Psoas muscle (tissue), 8 donors: ENCODE measurements at regions of chr2 and their contacts with region 1.

Region 1: DNA sequence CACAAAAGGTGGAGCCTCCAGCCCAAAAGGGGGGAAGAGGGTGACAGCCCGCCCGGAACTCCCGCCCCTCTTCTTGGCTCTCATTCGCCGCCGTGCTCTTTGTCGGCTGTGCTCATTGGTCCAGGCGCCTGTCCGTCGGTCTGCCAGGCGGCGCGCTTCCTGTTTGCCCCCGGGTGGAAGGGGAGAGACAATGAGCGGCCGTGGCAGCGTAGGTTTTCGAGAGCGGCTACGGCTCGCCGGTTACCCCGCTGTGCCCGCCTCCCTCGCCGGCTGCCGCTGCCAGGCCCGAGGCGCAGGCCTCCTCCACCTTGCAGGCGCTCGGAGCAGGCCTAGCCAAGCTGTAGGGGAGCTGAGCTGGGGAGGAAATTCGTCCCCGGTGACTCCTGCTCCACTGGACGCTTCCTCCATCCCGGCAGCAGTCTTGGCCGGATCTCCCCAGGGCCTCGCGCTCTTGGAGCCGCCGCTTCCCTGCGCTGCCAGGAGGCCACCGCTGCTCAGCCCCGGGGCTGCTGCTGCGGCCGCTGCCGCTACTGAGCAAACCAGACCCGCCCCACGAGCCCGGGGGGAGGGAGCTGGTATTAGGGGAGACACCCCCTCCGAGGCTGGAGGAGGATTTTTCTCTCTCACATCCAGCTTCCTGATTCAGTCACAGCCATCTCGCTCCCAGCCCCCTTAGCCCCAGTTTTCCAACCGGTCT is at the start of gene SP3:
- DNase-seq: peak; percentile 98 to 99
- ATAC-seq: peak; percentile 88 to 91 (median 89)
- H3K4me3 ChIP-seq: peak within 1 kb of the TSS; percentile 96
- H3K27ac ChIP-seq: peak within 1 kb of the TSS; percentile 100
- H3K4me1 ChIP-seq: peaks cover 35% of the 10 kb centered on the region
- H3K27me3 ChIP-seq: no peaks in the 10 kb centered on the region
- CTCF ChIP-seq: no peak
- total RNA-seq, gene SP3: 38.2 to 52.0 (median 45.4) TPM

Region 2: GRCh38 chr2:173834141-173834540 is 131.3 kb before region 1 on chr2:
- intact Hi-C with region 1: no loop called
- DNase-seq: no peak
- ATAC-seq: no peak
- H3K4me3 ChIP-seq: no peak overlapping the region
- H3K27ac ChIP-seq: no peak overlapping the region
- H3K4me1 ChIP-seq: no peaks in the 10 kb centered on the region
- H3K27me3 ChIP-seq: no peaks in the 10 kb centered on the region
- CTCF ChIP-seq: no peak

Region 3: DNA sequence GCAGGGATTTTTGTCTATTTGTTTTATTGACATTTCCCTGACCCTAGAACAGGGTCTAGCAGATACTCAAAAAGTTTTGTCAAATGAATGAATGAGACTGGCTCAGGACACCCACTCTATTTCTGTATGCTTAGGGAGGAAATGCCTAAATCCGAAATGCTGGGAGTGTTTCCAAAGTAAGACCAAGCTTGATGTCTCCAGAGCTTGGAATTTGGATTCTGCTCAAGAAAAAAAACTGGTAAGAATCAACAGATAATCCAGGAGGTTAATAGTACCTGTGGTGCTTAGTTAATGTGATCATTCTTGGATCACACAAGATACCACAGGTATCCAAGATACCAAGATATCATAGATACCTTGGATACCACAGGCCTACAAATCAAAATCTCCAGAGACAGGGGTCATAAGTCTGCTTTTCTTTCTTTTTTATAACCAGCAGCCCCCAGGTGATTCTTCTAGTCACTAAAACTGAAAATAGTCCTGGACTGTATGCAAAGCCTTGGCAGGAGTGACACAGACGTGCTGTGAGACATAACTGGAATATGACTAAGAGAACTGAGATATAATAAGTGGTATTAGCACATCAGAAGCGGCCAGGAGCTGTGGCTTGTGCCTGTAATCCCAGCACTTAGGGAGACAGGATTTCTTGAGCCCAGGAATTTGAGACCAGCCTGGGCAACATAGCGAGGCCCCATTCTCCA is 39.6 kb after region 1 on chr2:
- intact Hi-C with region 1: loop called (anchors 5 kb)
- DNase-seq: peak; percentile 41 to 73
- ATAC-seq: peak; percentile 98 to 99 (median 98)
- H3K4me3 ChIP-seq: no peak overlapping the region
- H3K27ac ChIP-seq: peak overlapping the region; percentile 74
- H3K4me1 ChIP-seq: peaks cover 10% of the 10 kb centered on the region
- H3K27me3 ChIP-seq: no peaks in the 10 kb centered on the region
- CTCF ChIP-seq: no peak

Region 4: GRCh38 chr2:174023591-174024523 is 58.4 kb after region 1 on chr2:
- intact Hi-C with region 1: loop called in 1 of 2 experiments (anchors 1 kb)
- DNase-seq: peak; percentile 63 to 81
- ATAC-seq: peak; percentile 84 to 90 (median 88)
- H3K4me3 ChIP-seq: peak overlapping the region; percentile 48
- H3K27ac ChIP-seq: peak overlapping the region; percentile 92
- H3K4me1 ChIP-seq: peaks cover 26% of the 10 kb centered on the region
- H3K27me3 ChIP-seq: no peaks in the 10 kb centered on the region
- CTCF ChIP-seq: no peak

Region 5: DNA sequence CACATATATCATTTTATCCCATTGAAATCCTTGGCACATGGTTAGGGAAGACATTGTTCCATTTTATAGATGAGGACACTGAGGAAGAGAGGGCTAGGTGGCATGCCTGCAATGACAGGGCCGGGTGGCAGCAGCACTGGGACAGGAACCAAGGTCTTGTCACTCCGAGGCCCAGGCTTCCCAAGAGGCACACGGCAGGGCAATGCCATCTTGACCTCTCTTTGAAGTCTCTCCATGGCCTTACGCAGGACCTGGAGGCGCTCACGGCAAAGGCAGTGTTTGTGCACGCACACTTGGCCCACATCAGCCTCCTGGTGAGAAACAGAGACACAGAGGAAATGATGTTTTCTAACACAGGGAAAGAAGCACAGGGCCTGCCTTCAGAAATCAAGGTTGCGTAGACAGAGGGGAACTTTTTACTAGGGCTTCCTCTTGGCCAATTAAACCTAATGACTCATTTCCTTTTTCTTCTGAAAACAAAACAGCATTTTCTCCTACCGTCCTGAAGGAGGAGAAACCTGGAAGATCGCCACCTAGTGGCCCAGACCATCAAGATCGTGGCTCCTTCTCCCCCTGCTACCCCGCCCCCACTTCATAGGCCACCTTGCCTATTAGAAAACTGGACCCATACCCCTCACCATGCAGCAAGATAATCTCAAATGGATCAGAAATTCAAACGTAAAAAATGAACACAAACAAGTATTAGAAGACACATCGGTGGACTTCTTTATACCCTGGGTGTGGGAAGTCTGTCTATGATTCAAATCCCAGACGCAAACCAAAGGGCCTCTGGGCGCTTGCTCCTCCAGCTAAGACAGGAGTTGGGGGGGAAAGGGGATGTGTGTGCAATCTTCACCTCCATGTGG is 74.3 kb after region 1 on chr2:
- intact Hi-C with region 1: loop called in 1 of 2 experiments (anchors 5 kb)
- DNase-seq: peak; percentile 86 to 92
- ATAC-seq: peak; percentile 76 to 87 (median 80)
- H3K4me3 ChIP-seq: peak overlapping the region; percentile 40
- H3K27ac ChIP-seq: peak overlapping the region; percentile 75
- H3K4me1 ChIP-seq: peaks cover 20% of the 10 kb centered on the region
- H3K27me3 ChIP-seq: no peaks in the 10 kb centered on the region
- CTCF ChIP-seq: peak; percentile 78

Region 6: DNA sequence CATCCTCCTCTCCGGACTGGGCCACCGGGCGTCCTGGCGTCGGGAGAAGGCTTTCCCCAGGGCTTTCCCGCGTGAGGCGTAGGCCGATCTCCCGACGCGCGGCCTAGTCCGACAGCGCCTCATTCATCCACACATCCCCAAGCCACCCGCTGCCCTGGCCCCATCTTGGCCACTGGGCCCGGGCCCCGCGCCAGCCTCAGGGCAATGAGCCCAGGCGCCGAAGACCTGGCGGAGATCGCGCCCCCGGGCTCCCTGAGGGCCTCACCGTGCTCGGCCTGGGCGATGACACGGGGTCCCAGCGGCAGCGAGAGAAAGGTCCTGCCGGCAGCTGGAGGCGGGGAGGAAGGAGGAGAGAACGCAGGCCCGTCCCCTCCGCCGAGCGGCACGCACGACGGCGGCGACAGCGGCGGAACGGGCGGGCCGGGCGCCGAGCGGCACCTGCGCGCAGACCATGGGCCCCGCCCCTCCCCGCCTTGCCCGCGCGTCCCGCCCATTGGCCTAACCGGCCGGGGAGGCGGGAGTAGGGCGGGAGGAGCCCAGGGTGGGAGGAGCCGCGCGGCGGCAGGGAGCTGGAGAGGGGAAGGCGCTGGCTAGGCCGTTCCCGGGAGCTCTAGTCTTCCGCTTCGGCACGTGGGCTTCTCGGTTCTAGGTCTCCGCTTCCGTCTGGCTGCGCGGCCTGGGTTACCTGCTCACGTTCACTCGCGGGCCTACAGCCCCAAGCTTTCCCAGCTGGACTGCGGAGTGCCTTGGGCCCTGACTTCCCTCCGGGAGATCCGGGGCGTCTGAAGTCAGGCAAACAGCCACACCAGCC is 282.9 kb after region 1 on chr2 and contains the start of gene OLA1:
- intact Hi-C with region 1: loop called in 1 of 2 experiments (anchors 5 kb)
- DNase-seq: peak; percentile 96 to 98
- ATAC-seq: peak; percentile 99 to 100 (median 100)
- H3K4me3 ChIP-seq: peak within 1 kb of the TSS; percentile 66
- H3K27ac ChIP-seq: peak within 1 kb of the TSS; percentile 93
- H3K4me1 ChIP-seq: peaks cover 10% of the 10 kb centered on the region
- H3K27me3 ChIP-seq: no peaks in the 10 kb centered on the region
- CTCF ChIP-seq: peak; percentile 7
- total RNA-seq, gene OLA1: 86.8 to 125 (median 115) TPM